ENCODE measurements at regions of chr7 and their contacts with region 1.

Region 1: GRCh38 chr7:22488643-22489462 is 11.1 kb downstream of the STEAP1B start:
- DNase-seq: peak in 4 of 5 donors; percentile 54 to 63 (median 59)
- ATAC-seq: peak in 3 of 4 donors; percentile 80 to 87 (median 85)
- H3K4me3 ChIP-seq: no peak overlapping the region
- H3K27ac ChIP-seq: no peak overlapping the region
- H3K4me1 ChIP-seq: peaks cover 0 to 7% (median 1%) of the 10 kb centered on the region in 12 donors
- H3K27me3 ChIP-seq: peaks cover 0 to 4% (median 0%) of the 10 kb centered on the region in 9 donors
- CTCF ChIP-seq: peak; percentile 84 to 96 (median 88)
- POLR2A ChIP-seq: no peak

Region 2: DNA sequence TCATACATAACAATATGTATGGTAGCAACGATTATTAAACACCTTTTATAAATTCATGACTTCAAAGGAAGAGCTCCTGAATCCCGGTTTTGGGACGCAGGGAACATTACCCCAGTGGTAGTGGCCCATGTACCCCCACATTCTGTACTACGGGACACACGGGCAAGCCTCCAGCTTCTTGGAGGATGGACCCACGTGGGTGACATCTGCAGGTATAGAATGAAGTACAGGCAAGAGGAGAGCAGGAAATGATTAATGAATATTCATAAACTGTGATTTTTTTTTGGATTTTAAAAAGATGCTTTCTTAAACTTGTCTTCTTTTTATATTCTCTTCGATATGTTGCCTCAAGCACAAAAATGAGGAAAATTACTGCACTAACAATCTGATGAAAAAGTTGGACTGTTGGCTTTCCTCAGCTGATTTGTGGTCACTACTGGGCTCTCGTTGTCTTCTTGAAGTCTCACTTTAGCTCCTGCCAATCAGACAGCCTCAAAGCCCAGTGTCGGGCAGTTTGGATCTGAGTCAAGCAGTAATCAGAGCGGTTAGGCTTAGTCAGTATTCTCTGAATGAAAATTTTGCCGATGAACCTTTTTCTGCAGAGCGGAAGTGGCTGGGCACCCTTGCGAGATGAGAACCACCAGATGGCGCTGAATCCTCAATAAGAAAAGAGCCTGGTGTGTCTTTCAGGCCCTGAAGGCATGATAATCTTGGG is 385.4 kb before region 1 on chr7:
- intact Hi-C with region 1: loop called in 2 of 10 experiments (anchors 1 to 2 kb)
- DNase-seq: peak in 4 of 5 donors; percentile 29 to 58 (median 48)
- ATAC-seq: peak in 3 of 4 donors; percentile 60 to 77 (median 70)
- H3K4me3 ChIP-seq: no peak overlapping the region
- H3K27ac ChIP-seq: no peak overlapping the region
- H3K4me1 ChIP-seq: peaks cover 0 to 4% (median 0%) of the 10 kb centered on the region in 12 donors
- H3K27me3 ChIP-seq: peaks cover 0 to 5% (median 0%) of the 10 kb centered on the region in 9 donors
- CTCF ChIP-seq: peak; percentile 65 to 87 (median 74)
- POLR2A ChIP-seq: no peak

Region 3: GRCh38 chr7:22302951-22303423 is 185.9 kb before region 1 on chr7:
- intact Hi-C with region 1: loop called in 6 of 10 experiments (anchors 5 to 10 kb)
- DNase-seq: no peak
- ATAC-seq: no peak
- H3K4me3 ChIP-seq: no peak overlapping the region
- H3K27ac ChIP-seq: no peak overlapping the region
- H3K4me1 ChIP-seq: no peaks in the 10 kb centered on the region
- H3K27me3 ChIP-seq: no peaks in the 10 kb centered on the region
- CTCF ChIP-seq: no peak
- POLR2A ChIP-seq: no peak